ENCODE measurements at regions of chr14 and their contacts with region 1.

Region 1: GRCh38 chr14:92783816-92784431 is 10.2 kb upstream of the GOLGA5 start:
- DNase-seq: no peak
- ATAC-seq: no peak
- H3K4me3 ChIP-seq: no peak overlapping the region
- H3K27ac ChIP-seq: no peak overlapping the region
- H3K4me1 ChIP-seq: no peaks in the 10 kb centered on the region
- H3K27me3 ChIP-seq: no peaks in the 10 kb centered on the region

Region 2: GRCh38 chr14:92135267-92135666 is 648.7 kb before region 1 on chr14:
- intact Hi-C with region 1: loop called in 1 of 2 experiments (anchors 10 kb)
- DNase-seq: no peak
- ATAC-seq: no peak
- H3K4me3 ChIP-seq: no peak overlapping the region
- H3K27ac ChIP-seq: no peak overlapping the region
- H3K4me1 ChIP-seq: no peaks in the 10 kb centered on the region
- H3K27me3 ChIP-seq: no peaks in the 10 kb centered on the region

Region 3: GRCh38 chr14:92686900-92687444 is 97.0 kb before region 1 on chr14:
- intact Hi-C with region 1: loop called in 1 of 2 experiments (anchors 5 kb)
- DNase-seq: peak; percentile 85 to 95
- ATAC-seq: peak; percentile 93
- H3K4me3 ChIP-seq: no peak overlapping the region
- H3K27ac ChIP-seq: no peak overlapping the region
- H3K4me1 ChIP-seq: no peaks in the 10 kb centered on the region
- H3K27me3 ChIP-seq: no peaks in the 10 kb centered on the region

Region 4: GRCh38 chr14:92719890-92720323 is 64.0 kb before region 1 on chr14:
- intact Hi-C with region 1: loop called (anchors 2 kb)
- DNase-seq: peak in 1 of 2 donors; percentile 44
- ATAC-seq: peak; percentile 62
- H3K4me3 ChIP-seq: no peak overlapping the region
- H3K27ac ChIP-seq: no peak overlapping the region
- H3K4me1 ChIP-seq: peaks cover 0 to 4% of the 10 kb centered on the region in 2 donors
- H3K27me3 ChIP-seq: no peaks in the 10 kb centered on the region

Region 5: GRCh38 chr14:92748259-92749016 is 35.5 kb before region 1 on chr14 and contains the start of gene LGMN:
- intact Hi-C with region 1: loop called in 1 of 2 experiments (anchors 2 kb)
- DNase-seq: peak; percentile 98
- ATAC-seq: peak; percentile 97
- H3K4me3 ChIP-seq: peak within 1 kb of the TSS; percentile 63 to 81
- H3K27ac ChIP-seq: peak within 1 kb of the TSS in 1 of 2 donors; percentile 68
- H3K4me1 ChIP-seq: no peaks in the 10 kb centered on the region
- H3K27me3 ChIP-seq: no peaks in the 10 kb centered on the region
- total RNA-seq, gene LGMN: 90.0 to 164 TPM

Measured in aorta (tissue), 5 donors.